CD4-positive, alpha-beta memory T cell (primary cell): ENCODE measurements at regions of chr14 and their contacts with region 1.

Region 1: DNA sequence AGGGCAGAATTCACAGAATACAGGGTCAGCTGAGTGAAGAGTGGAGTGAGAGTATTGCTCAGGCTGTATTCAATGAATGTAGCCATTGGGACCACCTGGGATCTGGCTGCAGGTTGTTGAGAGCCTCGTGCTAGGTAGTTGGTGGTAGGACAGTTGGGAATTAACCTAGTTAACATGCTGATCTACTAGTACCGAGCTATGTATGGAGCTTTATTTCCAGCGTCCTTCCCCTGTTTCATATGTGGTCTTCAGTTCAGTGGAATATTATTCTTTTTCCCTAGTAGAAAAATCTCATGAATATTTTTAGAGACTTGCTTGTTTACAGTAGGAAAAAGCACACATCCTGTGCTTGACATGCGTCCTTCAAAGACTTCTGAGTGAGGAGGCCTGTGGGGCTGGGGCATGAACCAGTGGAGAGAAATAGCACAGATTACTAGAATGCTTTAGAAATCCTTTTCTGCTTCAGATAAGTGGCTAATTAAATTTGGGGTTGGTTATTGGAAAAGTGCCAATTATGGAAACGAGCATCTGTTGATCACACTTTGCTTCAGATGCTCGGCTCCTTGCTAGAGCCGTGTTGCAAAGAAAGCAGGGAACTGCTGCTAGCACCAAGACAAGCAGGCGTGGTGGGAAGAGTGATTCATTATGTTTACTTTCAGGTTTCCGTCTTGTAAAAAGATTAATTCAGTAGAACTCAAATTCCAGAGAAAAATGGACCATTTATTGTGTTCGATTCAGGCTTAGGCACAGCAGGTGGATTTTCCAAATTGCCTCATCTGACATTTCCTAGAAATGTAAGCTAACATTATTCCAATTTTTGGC is 53.6 kb downstream of the ARF6 start:
- DNase-seq: peak; percentile 40 to 67 (median 41)
- H3K4me3 ChIP-seq: peak overlapping the region in 1 of 2 donors; percentile 11
- H3K4me3 Mint-ChIP-seq: peak overlapping the region; percentile 1 to 78 (median 67)
- H3K27ac ChIP-seq: peak overlapping the region; percentile 64
- H3K27ac Mint-ChIP-seq: peak overlapping the region; percentile 90 to 97 (median 94)
- H3K4me1 ChIP-seq: peaks cover 69% of the 10 kb centered on the region
- H3K4me1 Mint-ChIP-seq: peaks cover 59 to 91% (median 72%) of the 10 kb centered on the region in 4 donors
- H3K27me3 ChIP-seq: no peaks in the 10 kb centered on the region
- H3K27me3 Mint-ChIP-seq: no peaks in the 10 kb centered on the region

Region 2: DNA sequence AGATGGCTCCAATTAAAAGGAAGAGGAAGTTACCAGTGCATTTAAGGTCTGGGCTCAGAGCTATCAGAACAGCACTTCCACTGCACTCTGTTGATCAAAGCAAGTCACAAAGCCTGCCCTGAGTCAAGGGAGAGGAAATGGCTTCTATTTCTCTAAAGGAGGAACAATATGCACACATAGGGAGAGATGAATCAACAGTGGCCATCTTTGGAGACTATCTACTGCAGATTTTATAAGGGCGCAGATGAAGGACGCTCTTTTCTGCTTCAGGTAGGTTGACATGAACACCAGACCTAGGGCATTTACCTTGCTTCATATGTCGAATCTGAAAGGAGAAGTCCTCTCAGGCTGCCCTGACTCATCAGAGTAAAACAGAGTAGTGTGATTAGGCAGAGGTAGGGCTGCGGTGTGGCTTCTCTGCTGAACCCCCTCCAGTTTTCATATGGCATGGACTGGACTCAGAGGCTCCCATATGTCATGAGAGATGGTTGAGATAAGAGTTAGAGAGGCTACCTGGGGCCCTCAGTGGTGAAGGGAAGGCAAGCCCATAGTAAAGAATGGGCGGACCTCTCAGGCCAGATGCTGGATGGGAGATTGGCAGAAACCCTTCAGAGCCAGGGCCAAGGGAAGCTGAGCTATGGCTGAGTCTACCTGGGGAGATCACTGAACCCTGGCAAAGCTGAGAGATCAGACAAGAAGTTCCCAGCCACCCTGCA is 30.8 kb after region 1 on chr14:
- CTCF ChIA-PET with region 1: interaction called, 44 read pairs
- POLR2A ChIA-PET with region 1: interaction called, 195 read pairs
- intact Hi-C with region 1: loop called (anchors 1 kb)
- DNase-seq: peak; percentile 48 to 66 (median 61)
- H3K4me3 ChIP-seq: peak overlapping the region; percentile 50 to 53
- H3K4me3 Mint-ChIP-seq: peak overlapping the region; percentile 75 to 89 (median 84)
- H3K27ac ChIP-seq: peak overlapping the region; percentile 48
- H3K27ac Mint-ChIP-seq: peak overlapping the region; percentile 91 to 95 (median 93)
- H3K4me1 ChIP-seq: peaks cover 100% of the 10 kb centered on the region
- H3K4me1 Mint-ChIP-seq: peaks cover 60 to 96% (median 87%) of the 10 kb centered on the region in 4 donors
- H3K27me3 ChIP-seq: no peaks in the 10 kb centered on the region
- H3K27me3 Mint-ChIP-seq: no peaks in the 10 kb centered on the region